BJ (cell line): ENCODE measurements at regions of chr3 and their contacts with region 1.

Region 1: GRCh38 chr3:174440741-174441587 is 418.2 kb upstream of the NAALADL2 start:
- DNase-seq: peak; percentile 68
- H3K4me3 ChIP-seq: peak overlapping the region; percentile 73
- H3K27me3 ChIP-seq: no peaks in the 10 kb centered on the region
- CTCF ChIP-seq: no peak

Region 2: GRCh38 chr3:175269351-175269750 is 828.4 kb after region 1 on chr3:
- CTCF ChIA-PET with region 1: no interaction called
- POLR2A ChIA-PET with region 1: interaction called, 11 read pairs
- DNase-seq: no peak
- H3K4me3 ChIP-seq: no peak overlapping the region
- H3K27me3 ChIP-seq: no peaks in the 10 kb centered on the region
- CTCF ChIP-seq: no peak